GM10248 (cell line): ENCODE measurements at regions of chr5 and their contacts with region 1.

Region 1: DNA sequence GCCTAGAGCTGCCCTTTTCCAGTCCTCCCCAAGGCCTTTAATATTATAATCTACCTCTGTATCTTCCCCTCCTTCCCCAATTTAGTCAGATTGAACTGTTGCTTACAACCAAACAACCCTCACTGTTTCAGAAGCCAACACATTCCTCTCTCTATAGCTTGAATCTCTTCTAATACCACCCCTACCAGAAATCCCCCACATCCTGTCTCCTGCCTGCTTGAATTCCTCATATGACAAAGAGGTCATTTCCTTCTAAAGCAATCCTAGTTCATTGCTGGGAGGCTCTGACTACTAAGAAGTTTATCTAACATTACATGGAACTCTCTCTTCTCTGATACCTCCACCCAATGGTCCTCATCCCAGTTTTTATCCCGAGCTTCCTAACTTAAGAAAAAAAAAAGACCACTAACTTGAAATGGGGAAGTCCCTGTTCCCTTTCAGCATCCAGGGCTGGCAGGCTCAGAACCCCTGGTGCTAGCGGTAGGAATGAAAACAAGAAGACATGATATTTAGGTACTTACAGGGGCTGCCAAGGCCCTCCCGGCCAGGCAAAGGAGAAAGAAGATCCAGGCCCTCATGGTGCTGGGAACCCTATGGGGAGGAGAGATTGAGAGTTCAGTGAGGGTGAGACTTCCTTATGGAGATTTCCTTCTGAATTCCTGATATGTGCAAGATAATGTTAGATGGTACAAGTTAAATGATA is 11.0 kb downstream of the SPARC start:
- DNase-seq: no peak
- CTCF ChIP-seq: no peak

Region 2: GRCh38 chr5:151298063-151298855 is 377.5 kb before region 1 on chr5:
- CTCF ChIA-PET with region 1: no interaction called
- POLR2A ChIA-PET with region 1: no interaction called
- DNase-seq: no peak
- CTCF ChIP-seq: no peak

Region 3: GRCh38 chr5:151686674-151687407 is 11.1 kb after region 1 on chr5 and contains the start of gene SPARC:
- CTCF ChIA-PET with region 1: interaction called, 38 read pairs
- POLR2A ChIA-PET with region 1: no interaction called
- DNase-seq: peak; percentile 45
- CTCF ChIP-seq: no peak

Region 4: DNA sequence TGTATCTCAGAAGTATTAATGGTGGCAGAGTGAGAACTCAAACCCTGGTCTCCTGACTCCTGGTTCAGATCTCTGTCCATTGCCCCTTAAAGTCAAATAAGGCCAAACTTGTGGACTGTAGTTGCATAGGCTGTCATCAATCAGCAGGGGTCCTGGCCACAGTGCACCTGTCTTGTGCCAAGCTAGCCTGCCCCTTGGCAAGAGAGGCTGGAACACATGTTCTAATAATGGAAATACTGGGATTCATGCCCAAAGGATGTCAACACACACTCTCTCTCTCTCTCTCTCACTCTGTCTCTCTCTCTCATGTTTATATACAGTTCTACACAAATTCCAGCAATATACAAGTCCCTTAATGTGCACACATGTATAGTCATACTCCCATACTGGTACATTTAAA is 204.6 kb after region 1 on chr5:
- CTCF ChIA-PET with region 1: no interaction called
- POLR2A ChIA-PET with region 1: no interaction called
- DNase-seq: no peak
- CTCF ChIP-seq: no peak